Tibial artery (tissue), 4 donors: ENCODE measurements at regions of chr10 and their contacts with region 1.

Region 1: GRCh38 chr10:91627344-91628102 is 5.3 kb downstream of the PPP1R3C start:
- DNase-seq: no peak
- H3K4me3 ChIP-seq: peak overlapping the region; percentile 65 to 75
- H3K27ac ChIP-seq: peak overlapping the region; percentile 50 to 78
- H3K4me1 ChIP-seq: peaks cover 0 to 26% (median 12%) of the 10 kb centered on the region in 4 donors
- H3K27me3 ChIP-seq: no peaks in the 10 kb centered on the region
- CTCF ChIP-seq: no peak

Region 2: DNA sequence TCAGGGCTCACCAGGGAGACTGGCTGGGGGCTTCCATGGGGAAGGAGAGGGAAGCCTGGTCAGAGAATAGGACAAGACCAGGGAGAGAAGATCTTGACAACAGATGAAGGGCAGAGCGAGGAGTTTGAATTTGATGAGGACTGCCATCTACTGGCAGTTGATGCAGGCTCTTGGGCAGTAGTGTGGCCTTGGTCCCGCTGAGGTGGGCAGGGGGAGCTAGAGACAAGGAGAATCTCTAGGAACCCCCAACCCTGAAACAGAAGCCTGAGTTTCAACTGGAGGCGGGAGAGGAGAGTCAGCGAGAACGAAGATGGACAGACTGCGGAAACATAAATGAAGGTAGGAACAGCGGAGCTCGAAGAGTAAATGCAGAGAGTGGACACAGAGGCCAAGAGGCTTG is 75.7 kb before region 1 on chr10:
- intact Hi-C with region 1: loop called (anchors 10 kb)
- DNase-seq: peak in 1 of 2 donors; percentile 53
- H3K4me3 ChIP-seq: peak overlapping the region in 1 of 2 donors; percentile 7
- H3K27ac ChIP-seq: peak overlapping the region; percentile 27 to 37
- H3K4me1 ChIP-seq: peaks cover 0 to 34% (median 26%) of the 10 kb centered on the region in 4 donors
- H3K27me3 ChIP-seq: no peaks in the 10 kb centered on the region
- CTCF ChIP-seq: peak; percentile 34 to 44

Region 3: DNA sequence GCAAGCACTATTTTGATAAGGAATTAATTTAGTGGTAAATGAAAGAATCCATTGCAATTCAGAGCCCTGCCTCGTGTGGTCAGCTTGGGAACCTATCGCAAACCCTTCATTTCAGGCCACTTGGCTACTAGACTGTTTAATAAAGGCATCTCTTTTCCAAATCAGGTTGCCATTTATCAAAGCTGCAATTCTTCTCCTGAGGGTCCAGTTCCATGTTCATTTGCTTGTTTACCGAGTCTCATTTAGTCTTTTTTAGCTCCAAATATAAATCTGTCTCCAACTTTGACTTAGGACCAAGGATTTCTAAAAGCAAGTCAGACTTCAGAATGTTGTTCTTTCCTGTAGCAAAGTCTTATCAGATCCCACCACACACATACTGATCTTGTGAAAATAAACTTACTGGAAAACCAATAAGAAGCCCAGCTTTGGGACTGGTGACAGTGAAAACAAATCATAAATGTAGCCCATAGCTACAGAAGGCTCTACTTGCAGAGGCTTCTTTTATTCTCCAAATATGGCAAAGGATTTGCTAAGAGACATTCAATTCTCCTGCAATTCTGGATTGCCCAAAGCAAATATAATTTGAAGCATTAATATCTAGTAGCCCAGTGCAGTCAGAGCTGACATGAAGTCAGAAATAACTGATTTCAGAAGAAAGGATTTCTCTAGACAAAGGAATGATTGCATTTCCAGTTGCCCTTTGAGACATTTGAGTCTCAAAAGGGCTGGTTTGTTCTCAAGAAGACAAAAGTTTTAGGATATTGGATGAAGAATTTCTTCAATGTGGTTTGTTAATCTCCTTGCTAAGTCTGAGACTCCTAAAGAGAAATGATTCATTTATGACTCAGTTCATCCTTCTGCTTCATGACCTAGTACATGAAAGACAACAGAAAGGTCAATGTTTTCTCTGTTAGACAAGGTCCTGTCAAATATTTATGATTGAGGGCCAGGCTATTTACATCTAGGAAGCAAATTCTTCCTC is 22.7 kb before region 1 on chr10:
- intact Hi-C with region 1: no loop called
- DNase-seq: no peak
- H3K4me3 ChIP-seq: no peak overlapping the region
- H3K27ac ChIP-seq: peak overlapping the region; percentile 72 to 83
- H3K4me1 ChIP-seq: peaks cover 0 to 87% (median 52%) of the 10 kb centered on the region in 4 donors
- H3K27me3 ChIP-seq: no peaks in the 10 kb centered on the region
- CTCF ChIP-seq: peak; percentile 11 to 16